ENCODE measurements at regions of chr7 and their contacts with region 1.

Region 1: GRCh38 chr7:108002726-108003598 is at the start of gene LAMB1:
- DNase-seq: peak; percentile 75
- H3K4me3 Mint-ChIP-seq: peak within 1 kb of the TSS; percentile 86
- H3K27ac Mint-ChIP-seq: peak within 1 kb of the TSS; percentile 41
- H3K4me1 Mint-ChIP-seq: peaks cover 16% of the 10 kb centered on the region
- H3K27me3 Mint-ChIP-seq: no peaks in the 10 kb centered on the region
- CTCF ChIP-seq: no peak
- total RNA-seq, gene LAMB1: 199 and 275 TPM in 2 replicates

Region 2: GRCh38 chr7:107958764-107959526 is 44.0 kb before region 1 on chr7:
- CTCF ChIA-PET with region 1: interaction called, 4 read pairs
- POLR2A ChIA-PET with region 1: interaction called, 40 read pairs
- intact Hi-C with region 1: no loop called
- DNase-seq: peak; percentile 92
- H3K4me3 Mint-ChIP-seq: no peak overlapping the region
- H3K27ac Mint-ChIP-seq: peak overlapping the region; percentile 91
- H3K4me1 Mint-ChIP-seq: peaks cover 27% of the 10 kb centered on the region
- H3K27me3 Mint-ChIP-seq: no peaks in the 10 kb centered on the region
- CTCF ChIP-seq: no peak

Region 3: GRCh38 chr7:107989618-107990373 is 13.2 kb before region 1 on chr7:
- CTCF ChIA-PET with region 1: interaction called, 6 read pairs
- POLR2A ChIA-PET with region 1: interaction called, 16 read pairs
- intact Hi-C with region 1: no loop called
- DNase-seq: peak; percentile 69
- H3K4me3 Mint-ChIP-seq: no peak overlapping the region
- H3K27ac Mint-ChIP-seq: peak overlapping the region; percentile 0
- H3K4me1 Mint-ChIP-seq: peaks cover 27% of the 10 kb centered on the region
- H3K27me3 Mint-ChIP-seq: no peaks in the 10 kb centered on the region
- CTCF ChIP-seq: no peak

Region 4: DNA sequence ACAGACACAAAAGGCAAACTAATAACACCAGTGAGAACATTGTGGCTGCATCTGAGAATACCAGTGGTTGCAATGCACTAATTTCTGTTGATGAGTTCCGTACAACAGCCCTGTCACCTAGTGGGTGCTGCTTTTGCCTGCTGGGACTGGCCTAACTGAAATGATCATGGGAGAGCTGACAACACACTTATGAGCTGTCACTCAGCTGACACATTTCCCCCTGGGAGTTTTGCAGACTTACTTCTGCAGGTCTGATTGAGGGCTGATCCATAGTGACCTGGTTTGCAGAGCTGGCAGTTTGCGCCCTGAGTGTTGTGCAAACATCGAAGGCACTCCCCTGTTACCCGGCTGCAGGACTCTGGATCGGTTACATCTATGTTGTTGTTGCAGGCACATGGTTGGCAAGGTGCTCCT is 60.6 kb after region 1 on chr7:
- CTCF ChIA-PET with region 1: interaction called, 5 read pairs
- POLR2A ChIA-PET with region 1: interaction called, 21 read pairs
- intact Hi-C with region 1: no loop called
- DNase-seq: peak; percentile 73
- H3K4me3 Mint-ChIP-seq: no peak overlapping the region
- H3K27ac Mint-ChIP-seq: peak overlapping the region; percentile 16
- H3K4me1 Mint-ChIP-seq: peaks cover 11% of the 10 kb centered on the region
- H3K27me3 Mint-ChIP-seq: no peaks in the 10 kb centered on the region
- CTCF ChIP-seq: no peak

Region 5: DNA sequence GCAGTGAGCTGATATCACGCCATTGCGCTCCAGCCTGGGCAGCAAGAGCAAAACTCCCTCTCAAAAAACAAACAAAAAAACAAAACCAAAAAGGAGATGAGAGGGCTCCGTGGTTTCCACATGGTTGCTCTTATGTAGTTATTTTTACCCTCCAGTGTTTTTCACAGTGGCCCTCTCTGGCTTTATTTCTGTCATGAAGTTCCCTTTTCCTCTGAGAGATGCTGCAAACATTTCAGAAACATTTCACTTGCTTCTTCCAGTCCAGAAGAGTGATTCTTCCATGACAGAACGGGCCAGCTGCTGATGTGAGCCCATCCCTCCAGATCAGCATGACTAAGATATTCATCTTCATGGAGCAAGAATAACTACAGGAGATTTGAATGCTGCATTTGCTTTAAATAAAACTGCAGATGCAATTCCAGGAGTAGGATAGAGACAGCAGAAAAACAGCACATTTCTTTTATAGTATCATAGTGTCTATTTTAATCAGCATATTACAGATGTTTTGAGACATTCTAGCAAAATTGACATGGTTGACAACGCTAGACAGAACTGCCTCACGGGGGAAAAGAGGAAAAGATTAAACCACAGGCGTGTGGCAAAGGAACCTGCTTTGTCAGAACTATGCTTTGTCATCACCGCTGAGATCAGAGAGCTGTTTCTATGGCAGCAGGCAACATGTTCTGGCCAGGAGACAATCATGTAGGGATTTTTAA is 413.0 kb after region 1 on chr7:
- CTCF ChIA-PET with region 1: no interaction called
- POLR2A ChIA-PET with region 1: no interaction called
- intact Hi-C with region 1: no loop called
- DNase-seq: peak; percentile 43
- H3K4me3 Mint-ChIP-seq: no peak overlapping the region
- H3K27ac Mint-ChIP-seq: no peak overlapping the region
- H3K4me1 Mint-ChIP-seq: peaks cover 16% of the 10 kb centered on the region
- H3K27me3 Mint-ChIP-seq: no peaks in the 10 kb centered on the region
- CTCF ChIP-seq: no peak